Endothelial cell of umbilical vein (primary cell): ENCODE measurements at regions of chr6 and their contacts with region 1.

Region 1: GRCh38 chr6:37791156-37791919 is 28.2 kb upstream of the ZFAND3 start:
- DNase-seq: peak; percentile 94
- H3K4me3 ChIP-seq: no peak overlapping the region
- H3K27ac ChIP-seq: no peak overlapping the region
- H3K4me1 ChIP-seq: peaks cover 5% of the 10 kb centered on the region
- H3K27me3 ChIP-seq: peaks cover 2% of the 10 kb centered on the region in 2 experiments
- CTCF ChIP-seq: peak; percentile 97 to 98
- POLR2A ChIP-seq: no peak

Region 2: DNA sequence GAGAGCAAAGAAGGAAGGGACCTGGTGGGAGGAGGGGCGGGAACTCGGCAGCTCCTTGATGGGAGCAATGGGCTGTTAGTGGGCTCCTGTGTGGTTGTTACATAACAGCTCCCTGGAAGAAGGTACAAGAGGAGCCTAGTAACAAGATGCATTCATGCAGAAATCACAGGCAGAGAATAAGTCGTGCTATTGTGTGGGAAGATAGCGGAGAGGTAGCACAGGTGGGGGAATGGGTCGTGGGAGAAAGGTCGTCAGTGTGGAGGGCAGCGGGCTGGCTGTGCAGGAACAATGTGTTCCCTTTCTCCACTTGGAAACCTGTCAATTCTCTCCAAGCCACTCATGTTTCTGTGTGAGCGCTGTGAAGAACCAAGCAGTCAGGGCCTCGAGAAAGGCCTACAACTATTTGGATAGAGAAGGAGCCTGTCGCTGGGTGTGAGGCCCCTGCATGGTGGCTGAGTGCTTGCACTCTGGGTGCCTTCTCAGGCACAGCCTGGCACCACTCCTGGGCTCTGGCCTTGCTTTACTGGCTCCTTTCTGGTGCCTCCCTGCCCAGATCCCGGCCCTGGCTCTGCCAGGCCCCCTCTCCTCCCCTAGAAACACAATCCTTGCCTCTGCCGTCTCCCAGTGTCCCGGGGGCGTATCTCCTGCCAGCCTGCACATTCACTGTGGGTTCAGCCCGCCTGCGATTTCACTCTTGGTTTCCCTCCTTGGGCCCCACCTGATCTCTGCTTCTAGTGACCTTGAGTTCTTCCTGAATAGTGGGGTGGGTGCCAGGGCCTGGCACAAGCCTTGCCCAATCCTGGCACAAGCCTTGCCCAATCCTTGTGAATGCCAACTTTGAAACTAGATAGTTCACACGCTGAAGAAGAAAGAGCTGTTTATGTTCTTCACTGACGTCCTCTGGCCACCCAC is 793.3 kb before region 1 on chr6:
- CTCF ChIA-PET with region 1: no interaction called
- POLR2A ChIA-PET with region 1: no interaction called
- dilution Hi-C with region 1: no loop called
- intact Hi-C with region 1: no loop called
- DNase-seq: no peak
- H3K4me3 ChIP-seq: no peak overlapping the region
- H3K27ac ChIP-seq: no peak overlapping the region
- H3K4me1 ChIP-seq: no peaks in the 10 kb centered on the region
- H3K27me3 ChIP-seq: peaks cover 0 to 11% of the 10 kb centered on the region in 2 experiments
- CTCF ChIP-seq: no peak
- POLR2A ChIP-seq: no peak

Region 3: DNA sequence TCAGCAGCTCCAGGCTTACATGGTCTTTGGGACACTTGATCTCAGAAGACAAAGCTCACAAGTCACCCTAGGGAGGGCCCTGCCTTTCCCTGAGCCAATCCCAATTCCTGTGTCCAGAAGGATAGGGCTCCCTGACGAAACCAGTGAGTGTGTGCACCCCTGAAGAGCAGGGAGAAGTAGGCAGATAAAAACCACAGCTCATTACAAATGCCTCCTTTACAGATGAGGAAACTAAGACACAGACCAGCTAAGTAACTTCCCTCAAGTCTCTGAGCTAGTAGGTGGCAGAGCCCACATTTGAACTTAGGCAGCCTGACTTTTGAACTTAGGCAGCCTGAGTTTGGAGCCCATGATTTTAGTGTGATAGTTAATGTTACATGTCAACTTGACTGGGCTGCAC is 21.5 kb after region 1 on chr6:
- CTCF ChIA-PET with region 1: interaction called, 11 read pairs
- POLR2A ChIA-PET with region 1: no interaction called
- dilution Hi-C with region 1: no loop called
- intact Hi-C with region 1: no loop called
- DNase-seq: no peak
- H3K4me3 ChIP-seq: no peak overlapping the region
- H3K27ac ChIP-seq: no peak overlapping the region
- H3K4me1 ChIP-seq: no peaks in the 10 kb centered on the region
- H3K27me3 ChIP-seq: peaks cover 25 to 28% of the 10 kb centered on the region in 2 experiments
- CTCF ChIP-seq: no peak
- POLR2A ChIP-seq: no peak

Region 4: DNA sequence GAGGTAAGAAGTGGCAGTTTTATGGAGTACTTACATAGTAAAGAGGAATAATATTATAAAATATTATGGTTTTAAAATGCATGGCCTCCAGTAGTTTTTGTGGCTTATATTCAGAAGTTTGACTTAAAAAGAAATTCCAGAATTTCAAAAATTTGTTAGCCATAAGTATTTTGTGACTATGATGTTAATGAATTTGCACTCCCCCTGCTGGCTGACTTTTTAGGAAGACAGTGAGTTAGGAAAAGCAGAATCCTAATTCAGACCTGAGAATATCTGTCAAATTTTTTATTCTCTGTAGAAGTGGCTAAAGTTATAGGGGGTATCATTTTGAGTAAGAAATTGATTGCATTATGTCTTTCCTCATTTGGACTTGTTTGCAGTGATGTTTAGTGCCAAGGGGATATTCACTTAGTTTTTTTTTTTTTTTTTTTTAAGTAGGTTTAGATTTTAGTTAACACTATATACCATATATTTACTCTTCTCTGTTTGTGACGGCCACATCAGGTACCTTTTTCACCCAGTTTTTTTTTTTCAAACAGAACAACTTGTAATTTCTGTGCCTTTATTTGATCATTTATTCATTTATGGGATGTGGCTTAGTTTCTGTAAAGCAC is 69.0 kb after region 1 on chr6:
- CTCF ChIA-PET with region 1: interaction called, 25 read pairs
- POLR2A ChIA-PET with region 1: no interaction called
- dilution Hi-C with region 1: no loop called
- intact Hi-C with region 1: loop called (anchors 1 kb)
- DNase-seq: peak; percentile 50
- H3K4me3 ChIP-seq: no peak overlapping the region
- H3K27ac ChIP-seq: no peak overlapping the region
- H3K4me1 ChIP-seq: peaks cover 3% of the 10 kb centered on the region
- H3K27me3 ChIP-seq: no peaks in the 10 kb centered on the region
- CTCF ChIP-seq: peak; percentile 28 to 53
- POLR2A ChIP-seq: no peak

Region 5: DNA sequence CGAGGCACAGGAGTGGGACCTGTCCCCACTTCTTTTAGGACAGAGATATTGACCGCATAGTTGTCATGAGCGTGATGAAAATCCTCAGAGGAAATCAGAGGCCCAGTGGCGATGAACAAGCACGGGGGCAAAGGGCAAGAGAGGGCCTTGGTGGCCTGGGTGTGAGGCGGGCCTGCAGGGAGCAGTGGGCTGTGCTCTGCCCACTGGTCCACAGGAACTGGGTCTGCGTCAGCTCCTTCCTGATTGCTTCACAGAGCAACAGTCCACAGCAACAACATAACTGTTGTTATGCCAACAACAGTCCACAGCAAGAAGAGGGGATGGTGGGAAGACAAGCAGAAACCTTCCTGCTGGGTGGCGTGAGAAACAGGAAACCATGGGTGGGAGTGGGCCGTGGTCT is 363.8 kb after region 1 on chr6:
- CTCF ChIA-PET with region 1: no interaction called
- POLR2A ChIA-PET with region 1: no interaction called
- dilution Hi-C with region 1: no loop called
- intact Hi-C with region 1: loop called (anchors 10 kb)
- DNase-seq: peak; percentile 94
- H3K4me3 ChIP-seq: no peak overlapping the region
- H3K27ac ChIP-seq: peak overlapping the region; percentile 100
- H3K4me1 ChIP-seq: peaks cover 21% of the 10 kb centered on the region
- H3K27me3 ChIP-seq: no peaks in the 10 kb centered on the region
- CTCF ChIP-seq: no peak
- POLR2A ChIP-seq: no peak